ENCODE measurements at regions of chr13 and their contacts with region 1.

Region 1: GRCh38 chr13:105817021-105817420 is 718.4 kb downstream of the EFNB2 start:
- DNase-seq: peak; percentile 62 to 75
- H3K4me3 ChIP-seq: no peak overlapping the region
- H3K4me3 Mint-ChIP-seq: peak overlapping the region; percentile 38
- H3K27ac Mint-ChIP-seq: peak overlapping the region; percentile 97
- H3K4me1 ChIP-seq: peaks cover 28% of the 10 kb centered on the region
- H3K4me1 Mint-ChIP-seq: peaks cover 23% of the 10 kb centered on the region
- H3K27me3 ChIP-seq: no peaks in the 10 kb centered on the region
- H3K27me3 Mint-ChIP-seq: no peaks in the 10 kb centered on the region
- CTCF ChIP-seq: no peak

Region 2: DNA sequence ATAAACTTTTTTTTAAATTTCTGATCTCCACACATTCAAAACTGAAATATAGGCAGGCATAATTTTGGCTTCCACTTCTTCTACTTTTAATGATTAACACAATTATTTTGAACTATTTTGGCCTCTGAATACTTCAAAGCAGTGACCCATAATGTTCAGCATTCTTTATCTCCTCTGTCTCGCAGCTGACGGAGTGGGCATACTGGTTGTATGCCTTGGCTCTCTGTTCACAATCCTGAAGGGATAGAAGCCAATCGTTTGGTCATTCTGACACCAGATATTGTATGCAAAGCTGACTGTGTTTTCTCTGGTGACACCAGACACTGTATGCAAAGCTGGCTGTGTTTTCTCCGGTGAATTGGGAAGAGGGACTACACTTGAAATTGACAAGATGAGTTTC is 114.6 kb before region 1 on chr13:
- CTCF ChIA-PET with region 1: no interaction called
- POLR2A ChIA-PET with region 1: no interaction called
- intact Hi-C with region 1: loop called (anchors 2 kb)
- DNase-seq: peak; percentile 37
- H3K4me3 ChIP-seq: no peak overlapping the region
- H3K4me3 Mint-ChIP-seq: peak overlapping the region; percentile 32
- H3K27ac Mint-ChIP-seq: no peak overlapping the region
- H3K4me1 ChIP-seq: peaks cover 7% of the 10 kb centered on the region; the same call in 1 of the 2 replicates
- H3K4me1 Mint-ChIP-seq: peaks cover 8% of the 10 kb centered on the region
- H3K27me3 ChIP-seq: no peaks in the 10 kb centered on the region
- H3K27me3 Mint-ChIP-seq: no peaks in the 10 kb centered on the region
- CTCF ChIP-seq: no peak

Region 3: DNA sequence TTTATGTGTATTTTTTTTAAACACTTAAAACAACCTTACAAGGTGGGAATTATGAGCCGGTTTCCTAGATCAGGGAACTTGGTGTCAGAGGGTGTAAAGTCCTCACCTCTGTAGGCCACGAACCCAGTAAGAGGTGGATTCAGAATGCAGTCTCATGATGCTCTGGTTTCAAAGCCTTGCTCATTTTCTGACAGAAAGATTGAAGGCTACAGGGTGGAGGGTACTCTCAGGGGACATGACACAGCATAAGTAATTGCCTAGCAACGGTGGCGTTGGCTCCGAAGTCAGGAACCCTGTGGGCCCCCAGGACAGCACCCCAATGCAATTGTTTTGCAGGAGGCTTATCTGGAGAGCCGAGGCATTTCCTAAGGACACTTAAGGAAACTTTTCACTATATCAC is 76.3 kb before region 1 on chr13:
- CTCF ChIA-PET with region 1: no interaction called
- POLR2A ChIA-PET with region 1: no interaction called
- intact Hi-C with region 1: no loop called
- DNase-seq: no peak
- H3K4me3 ChIP-seq: no peak overlapping the region
- H3K4me3 Mint-ChIP-seq: no peak overlapping the region
- H3K27ac Mint-ChIP-seq: no peak overlapping the region
- H3K4me1 ChIP-seq: no peaks in the 10 kb centered on the region
- H3K4me1 Mint-ChIP-seq: no peaks in the 10 kb centered on the region
- H3K27me3 ChIP-seq: no peaks in the 10 kb centered on the region; the same call in 1 of the 2 replicates
- H3K27me3 Mint-ChIP-seq: no peaks in the 10 kb centered on the region
- CTCF ChIP-seq: no peak

Region 4: DNA sequence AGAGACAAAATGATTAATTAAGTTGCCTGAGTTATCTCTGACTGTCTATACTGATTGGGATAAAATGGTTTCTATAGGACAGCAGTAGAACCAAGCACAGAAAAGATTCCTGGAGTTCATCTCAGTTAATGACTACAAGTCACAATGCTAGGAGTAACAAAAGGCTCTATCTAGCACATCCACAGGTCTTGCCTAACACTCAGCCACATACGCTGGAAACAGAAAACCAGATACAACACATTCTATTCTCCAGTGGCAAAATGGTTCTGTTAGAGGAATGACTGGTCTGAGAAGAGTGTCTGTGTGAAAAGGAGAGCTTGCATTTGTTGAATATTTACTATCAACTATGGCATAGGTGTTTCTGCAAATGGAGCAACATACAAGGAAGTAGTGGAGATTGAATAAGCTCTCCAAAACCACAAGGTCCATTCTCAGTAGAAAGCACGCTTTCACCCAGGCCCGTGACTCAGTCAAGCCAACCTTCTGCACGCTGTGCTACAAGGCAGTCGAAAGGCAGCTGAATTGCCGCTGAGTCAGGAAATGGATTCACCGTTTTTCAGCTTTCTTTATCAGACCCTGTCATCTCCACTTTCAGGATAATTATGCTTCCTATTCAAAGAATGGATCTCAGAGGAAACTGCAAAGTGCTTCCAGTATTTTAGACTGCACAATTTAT is 43.0 kb before region 1 on chr13:
- CTCF ChIA-PET with region 1: no interaction called
- POLR2A ChIA-PET with region 1: no interaction called
- intact Hi-C with region 1: loop called (anchors 1 kb)
- DNase-seq: peak; percentile 8 to 38
- H3K4me3 ChIP-seq: no peak overlapping the region
- H3K4me3 Mint-ChIP-seq: peak overlapping the region; percentile 44
- H3K27ac Mint-ChIP-seq: peak overlapping the region; percentile 39
- H3K4me1 ChIP-seq: peaks cover 38% of the 10 kb centered on the region
- H3K4me1 Mint-ChIP-seq: peaks cover 33% of the 10 kb centered on the region
- H3K27me3 ChIP-seq: no peaks in the 10 kb centered on the region
- H3K27me3 Mint-ChIP-seq: no peaks in the 10 kb centered on the region
- CTCF ChIP-seq: no peak

Region 5: GRCh38 chr13:106078191-106078590 is 261.2 kb after region 1 on chr13:
- CTCF ChIA-PET with region 1: no interaction called
- POLR2A ChIA-PET with region 1: no interaction called
- intact Hi-C with region 1: loop called (anchors 5 kb)
- DNase-seq: peak; percentile 53 to 64
- H3K4me3 ChIP-seq: no peak overlapping the region
- H3K4me3 Mint-ChIP-seq: peak overlapping the region; percentile 58
- H3K27ac Mint-ChIP-seq: peak overlapping the region; percentile 84
- H3K4me1 ChIP-seq: peaks cover 30% of the 10 kb centered on the region
- H3K4me1 Mint-ChIP-seq: peaks cover 31% of the 10 kb centered on the region
- H3K27me3 ChIP-seq: no peaks in the 10 kb centered on the region
- H3K27me3 Mint-ChIP-seq: no peaks in the 10 kb centered on the region
- CTCF ChIP-seq: no peak

Region 6: GRCh38 chr13:106381091-106381490 is 564.1 kb after region 1 on chr13:
- CTCF ChIA-PET with region 1: no interaction called
- POLR2A ChIA-PET with region 1: no interaction called
- intact Hi-C with region 1: loop called (anchors 10 kb)
- DNase-seq: peak; percentile 76 to 82
- H3K4me3 ChIP-seq: no peak overlapping the region
- H3K4me3 Mint-ChIP-seq: peak overlapping the region; percentile 26
- H3K27ac Mint-ChIP-seq: peak overlapping the region; percentile 47
- H3K4me1 ChIP-seq: peaks cover 37% of the 10 kb centered on the region
- H3K4me1 Mint-ChIP-seq: peaks cover 30% of the 10 kb centered on the region
- H3K27me3 ChIP-seq: no peaks in the 10 kb centered on the region
- H3K27me3 Mint-ChIP-seq: no peaks in the 10 kb centered on the region
- CTCF ChIP-seq: no peak

Measured in Caco-2 (cell line).